ENCODE measurements at regions of chr20 and their contacts with region 1.

Region 1: DNA sequence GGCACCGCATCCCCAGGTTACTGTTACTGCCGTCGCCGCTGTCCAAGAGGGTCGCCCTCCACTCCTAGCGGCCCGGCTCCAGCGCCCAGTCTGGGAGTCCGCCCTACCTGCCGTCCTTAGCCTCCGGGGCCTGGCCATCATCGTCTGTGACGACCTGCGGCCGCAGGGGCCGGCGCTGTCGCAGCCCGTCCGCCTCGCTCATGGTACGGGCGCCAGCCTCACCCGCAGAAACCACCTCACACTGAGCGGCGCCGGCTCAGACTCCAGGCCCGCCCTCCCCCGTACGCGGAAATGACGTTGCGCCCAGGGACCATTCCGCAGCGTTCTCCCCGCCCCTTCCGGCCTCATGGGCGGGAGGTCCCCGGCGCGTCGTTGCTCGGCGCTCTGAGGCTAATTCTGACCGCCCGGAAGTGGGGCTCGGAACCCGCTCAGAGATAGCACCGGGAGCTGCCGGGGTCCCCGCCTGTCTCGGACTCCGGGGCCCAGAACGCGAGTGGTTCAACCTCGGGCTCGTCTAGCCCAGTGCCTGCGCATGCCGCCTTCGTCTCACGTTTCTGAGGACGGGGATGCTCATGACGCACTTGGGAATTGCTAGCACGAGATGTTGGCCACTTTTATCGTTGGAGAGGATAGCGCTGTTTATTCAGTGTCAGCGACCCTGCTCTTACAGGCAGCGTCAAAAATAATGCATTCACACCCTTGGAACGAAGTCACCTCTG is at the start of gene APMAP:
- DNase-seq: peak; percentile 94 to 97 (median 94)
- H3K4me3 ChIP-seq: peak within 1 kb of the TSS; percentile 55 to 93
- H3K4me3 Mint-ChIP-seq: peak within 1 kb of the TSS; percentile 93 to 98 (median 95)
- H3K27ac ChIP-seq: peak within 1 kb of the TSS; percentile 96
- H3K27ac Mint-ChIP-seq: peak within 1 kb of the TSS; percentile 95 to 99 (median 97)
- H3K4me1 ChIP-seq: peaks cover 49% of the 10 kb centered on the region
- H3K4me1 Mint-ChIP-seq: peaks cover 36 to 72% (median 54%) of the 10 kb centered on the region in 4 donors
- H3K27me3 ChIP-seq: no peaks in the 10 kb centered on the region
- H3K27me3 Mint-ChIP-seq: no peaks in the 10 kb centered on the region
- total RNA-seq, gene APMAP: 48.4 to 50.0 TPM

Region 2: DNA sequence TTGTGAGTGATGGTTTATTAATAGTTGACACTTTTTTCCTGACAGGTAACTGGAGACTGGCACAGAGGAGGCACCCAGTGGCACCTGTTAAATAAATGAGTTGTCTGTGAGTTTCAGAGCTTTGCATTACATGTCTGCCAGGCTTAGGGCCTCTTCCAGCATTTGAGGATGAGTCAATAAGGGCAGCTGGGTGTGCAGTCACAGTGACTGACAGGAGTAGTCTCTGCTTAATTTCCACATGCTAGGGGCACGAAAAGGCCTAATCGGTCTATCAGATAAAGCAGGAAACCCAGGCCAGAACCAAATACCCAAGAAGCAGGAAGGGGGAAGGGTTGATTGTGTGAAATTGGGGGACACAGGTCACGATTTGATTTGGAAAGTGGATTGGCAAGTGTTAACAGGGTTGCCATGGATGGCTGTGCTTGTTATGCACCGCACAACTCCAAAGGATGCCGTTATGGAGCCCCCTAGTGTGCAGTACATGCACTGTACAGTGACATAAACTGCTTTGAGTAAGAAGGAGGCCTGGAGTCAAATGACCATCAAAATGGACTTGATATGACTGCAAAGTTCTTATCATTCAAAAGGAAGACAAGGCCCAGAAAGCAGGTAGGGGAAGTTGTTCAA is 892.1 kb before region 1 on chr20:
- CTCF ChIA-PET with region 1: no interaction called
- POLR2A ChIA-PET with region 1: no interaction called
- intact Hi-C with region 1: loop called (anchors 10 kb)
- DNase-seq: peak; percentile 57 to 60 (median 59)
- H3K4me3 ChIP-seq: no peak overlapping the region
- H3K4me3 Mint-ChIP-seq: peak overlapping the region in 2 of 8 donors; percentile 36 to 41
- H3K27ac ChIP-seq: no peak overlapping the region
- H3K27ac Mint-ChIP-seq: peak overlapping the region in 3 of 7 donors; percentile 18 to 77 (median 52)
- H3K4me1 ChIP-seq: no peaks in the 10 kb centered on the region
- H3K4me1 Mint-ChIP-seq: peaks cover 0 to 6% (median 4%) of the 10 kb centered on the region in 4 donors
- H3K27me3 ChIP-seq: no peaks in the 10 kb centered on the region
- H3K27me3 Mint-ChIP-seq: peaks cover 0 to 4% of the 10 kb centered on the region in 2 donors

Region 3: DNA sequence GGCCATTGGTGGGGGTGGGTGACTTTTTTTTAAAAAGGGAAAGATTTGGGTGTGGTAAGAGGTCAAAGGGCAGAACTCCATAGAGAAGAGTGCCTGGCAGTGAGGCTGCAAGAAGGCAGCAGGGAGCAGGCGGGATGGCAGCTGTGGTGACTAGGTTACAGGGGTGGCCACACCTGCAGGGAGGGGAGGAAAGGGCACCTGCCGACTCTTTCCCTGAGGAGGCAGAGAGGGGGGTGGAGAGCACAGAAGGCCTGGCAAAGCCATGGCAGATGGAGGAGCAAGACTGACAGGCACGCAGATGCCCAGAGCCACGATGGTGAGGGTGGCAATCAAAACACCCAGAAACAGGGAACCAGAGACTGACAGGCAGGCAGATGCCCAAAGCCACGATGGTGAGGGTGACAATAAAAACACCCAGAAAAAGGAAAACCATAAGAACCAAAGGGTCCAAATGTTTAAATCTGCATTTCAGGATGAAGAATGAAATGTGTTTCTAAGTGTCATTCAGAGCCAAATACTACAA is 24.3 kb before region 1 on chr20:
- CTCF ChIA-PET with region 1: no interaction called
- POLR2A ChIA-PET with region 1: no interaction called
- intact Hi-C with region 1: no loop called
- DNase-seq: no peak
- H3K4me3 ChIP-seq: no peak overlapping the region
- H3K4me3 Mint-ChIP-seq: peak overlapping the region in 1 of 8 donors; percentile 48
- H3K27ac ChIP-seq: no peak overlapping the region
- H3K27ac Mint-ChIP-seq: peak overlapping the region in 2 of 7 donors; percentile 84 to 89
- H3K4me1 ChIP-seq: no peaks in the 10 kb centered on the region
- H3K4me1 Mint-ChIP-seq: peaks cover 0 to 6% (median 3%) of the 10 kb centered on the region in 4 donors
- H3K27me3 ChIP-seq: no peaks in the 10 kb centered on the region
- H3K27me3 Mint-ChIP-seq: no peaks in the 10 kb centered on the region

Region 4: DNA sequence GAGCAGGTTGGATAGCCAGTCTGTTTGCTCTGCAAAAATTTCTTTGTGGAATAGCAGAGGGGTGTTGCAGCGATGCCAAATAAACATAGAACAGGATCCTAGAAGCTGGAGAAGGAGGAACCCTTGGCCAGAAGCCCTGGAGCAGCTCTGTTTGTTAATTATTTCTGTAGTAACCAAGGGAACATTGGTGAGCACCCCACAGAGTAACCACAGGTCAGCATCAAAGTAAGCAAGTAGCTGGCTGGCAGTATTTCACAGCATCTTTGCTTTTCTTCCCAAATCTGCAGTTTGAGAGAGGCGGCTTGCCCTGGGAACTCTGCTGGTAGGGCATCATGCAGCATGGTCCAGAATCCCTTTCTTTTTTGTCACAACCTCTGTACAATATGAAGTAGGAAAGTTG is 12.6 kb after region 1 on chr20:
- CTCF ChIA-PET with region 1: interaction called, 14 read pairs
- POLR2A ChIA-PET with region 1: interaction called, 3 read pairs
- intact Hi-C with region 1: no loop called
- DNase-seq: no peak
- H3K4me3 ChIP-seq: no peak overlapping the region
- H3K4me3 Mint-ChIP-seq: no peak overlapping the region
- H3K27ac ChIP-seq: no peak overlapping the region
- H3K27ac Mint-ChIP-seq: peak overlapping the region in 1 of 7 donors; percentile 53
- H3K4me1 ChIP-seq: no peaks in the 10 kb centered on the region
- H3K4me1 Mint-ChIP-seq: peaks cover 0 to 3% (median 0%) of the 10 kb centered on the region in 4 donors
- H3K27me3 ChIP-seq: no peaks in the 10 kb centered on the region
- H3K27me3 Mint-ChIP-seq: no peaks in the 10 kb centered on the region

Region 5: GRCh38 chr20:25065625-25066338 is 73.1 kb after region 1 on chr20:
- CTCF ChIA-PET with region 1: interaction called, 260 read pairs
- POLR2A ChIA-PET with region 1: interaction called, 31 read pairs
- intact Hi-C with region 1: loop called (anchors 1 kb)
- DNase-seq: peak; percentile 66 to 70 (median 67)
- H3K4me3 ChIP-seq: no peak overlapping the region
- H3K4me3 Mint-ChIP-seq: no peak overlapping the region
- H3K27ac ChIP-seq: no peak overlapping the region
- H3K27ac Mint-ChIP-seq: peak overlapping the region in 2 of 7 donors; percentile 4 to 26
- H3K4me1 ChIP-seq: no peaks in the 10 kb centered on the region
- H3K4me1 Mint-ChIP-seq: peaks cover 4 to 8% (median 5%) of the 10 kb centered on the region in 4 donors
- H3K27me3 ChIP-seq: peaks cover 7% of the 10 kb centered on the region
- H3K27me3 Mint-ChIP-seq: peaks cover 16 to 18% of the 10 kb centered on the region in 2 donors

Region 6: GRCh38 chr20:25195014-25195961 is 202.6 kb after region 1 on chr20 and contains the start of gene ENTPD6:
- CTCF ChIA-PET with region 1: interaction called, 3 read pairs
- POLR2A ChIA-PET with region 1: interaction called, 20 read pairs
- intact Hi-C with region 1: loop called (anchors 1 kb)
- DNase-seq: peak; percentile 89 to 98 (median 93)
- H3K4me3 ChIP-seq: peak within 1 kb of the TSS; percentile 82 to 85
- H3K4me3 Mint-ChIP-seq: peak within 1 kb of the TSS; percentile 85 to 95 (median 90)
- H3K27ac ChIP-seq: peak within 1 kb of the TSS; percentile 77
- H3K27ac Mint-ChIP-seq: peak within 1 kb of the TSS; percentile 84 to 95 (median 93)
- H3K4me1 ChIP-seq: peaks cover 28% of the 10 kb centered on the region
- H3K4me1 Mint-ChIP-seq: peaks cover 33 to 46% (median 38%) of the 10 kb centered on the region in 4 donors
- H3K27me3 ChIP-seq: no peaks in the 10 kb centered on the region
- H3K27me3 Mint-ChIP-seq: no peaks in the 10 kb centered on the region
- total RNA-seq, gene ENTPD6: 90.2 to 94.3 TPM

Region 7: GRCh38 chr20:25390538-25391528 is 398.2 kb after region 1 on chr20 and contains the start of gene ABHD12:
- CTCF ChIA-PET with region 1: no interaction called
- POLR2A ChIA-PET with region 1: interaction called, 3 read pairs
- intact Hi-C with region 1: loop called (anchors 2 kb)
- DNase-seq: peak; percentile 91 to 95 (median 92)
- H3K4me3 ChIP-seq: peak within 1 kb of the TSS; percentile 57 to 83
- H3K4me3 Mint-ChIP-seq: peak within 1 kb of the TSS; percentile 86 to 91 (median 89)
- H3K27ac ChIP-seq: peak within 1 kb of the TSS; percentile 61
- H3K27ac Mint-ChIP-seq: peak within 1 kb of the TSS; percentile 73 to 94 (median 88)
- H3K4me1 ChIP-seq: peaks cover 15% of the 10 kb centered on the region
- H3K4me1 Mint-ChIP-seq: peaks cover 12 to 25% (median 14%) of the 10 kb centered on the region in 4 donors
- H3K27me3 ChIP-seq: no peaks in the 10 kb centered on the region
- H3K27me3 Mint-ChIP-seq: no peaks in the 10 kb centered on the region
- total RNA-seq, gene ABHD12: 30.1 to 30.9 TPM

Measured in CD4-positive, alpha-beta memory T cell (primary cell).